Heart left ventricle (tissue), 16 donors: ENCODE measurements at regions of chr1 and their contacts with region 1.

Region 1: GRCh38 chr1:91885716-91886506 is at the start of gene TGFBR3:
- DNase-seq: peak; percentile 93 to 96 (median 95)
- ATAC-seq: peak; percentile 95 to 97 (median 96)
- H3K4me3 ChIP-seq: peak within 1 kb of the TSS; percentile 70 to 100 (median 92)
- H3K27ac ChIP-seq: peak within 1 kb of the TSS; percentile 85 to 98 (median 94)
- H3K4me1 ChIP-seq: peaks cover 0 to 42% (median 17%) of the 10 kb centered on the region in 12 donors
- H3K27me3 ChIP-seq: peaks cover 0 to 29% (median 0%) of the 10 kb centered on the region in 9 donors
- CTCF ChIP-seq: peak; percentile 26 to 74 (median 54)
- POLR2A ChIP-seq: peak in 1 of 2 donors; percentile 89
- total RNA-seq, gene TGFBR3: 10.3 to 51.8 (median 28.1) TPM

Region 2: DNA sequence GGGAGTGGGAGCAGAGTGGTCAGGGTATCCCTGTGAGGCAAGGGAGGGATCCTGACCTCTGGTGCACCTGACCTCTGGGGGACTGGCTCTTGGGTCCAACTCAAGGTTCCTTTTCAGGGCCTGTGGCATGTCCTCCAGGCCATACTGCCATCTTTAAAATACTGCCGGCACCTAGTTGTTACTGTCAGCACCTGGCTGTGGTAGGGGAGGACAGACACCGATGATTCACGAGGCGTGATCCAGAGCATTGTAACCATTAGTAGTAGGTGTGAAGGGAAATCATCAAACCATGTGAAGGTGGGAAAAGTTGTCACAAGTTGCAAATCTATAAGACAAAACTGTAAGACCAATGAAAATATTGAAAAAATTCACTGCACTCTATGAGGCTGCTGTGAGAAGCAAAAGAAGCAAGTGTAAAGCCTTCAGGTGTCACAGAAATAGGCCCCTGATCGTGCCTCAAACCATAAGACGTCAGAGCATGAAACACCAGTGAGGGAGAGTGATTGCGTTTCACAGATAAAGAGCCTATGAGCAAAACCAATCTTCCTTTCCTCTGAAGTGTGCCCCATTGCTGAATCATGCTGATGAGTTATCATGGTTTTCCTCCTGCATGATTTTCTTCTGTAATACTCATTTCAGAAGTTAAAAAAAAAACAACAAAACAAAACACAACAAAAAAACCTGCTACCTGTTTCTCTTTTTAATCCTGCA is 329.9 kb before region 1 on chr1:
- intact Hi-C with region 1: loop called in 1 of 10 experiments (anchors 10 kb)
- DNase-seq: no peak
- ATAC-seq: peak in 1 of 4 donors; percentile 50
- H3K4me3 ChIP-seq: no peak overlapping the region
- H3K27ac ChIP-seq: peak overlapping the region in 2 of 12 donors; percentile 28 to 80
- H3K4me1 ChIP-seq: peaks cover 0 to 40% (median 0%) of the 10 kb centered on the region in 12 donors
- H3K27me3 ChIP-seq: no peaks in the 10 kb centered on the region
- CTCF ChIP-seq: no peak
- POLR2A ChIP-seq: no peak

Region 3: DNA sequence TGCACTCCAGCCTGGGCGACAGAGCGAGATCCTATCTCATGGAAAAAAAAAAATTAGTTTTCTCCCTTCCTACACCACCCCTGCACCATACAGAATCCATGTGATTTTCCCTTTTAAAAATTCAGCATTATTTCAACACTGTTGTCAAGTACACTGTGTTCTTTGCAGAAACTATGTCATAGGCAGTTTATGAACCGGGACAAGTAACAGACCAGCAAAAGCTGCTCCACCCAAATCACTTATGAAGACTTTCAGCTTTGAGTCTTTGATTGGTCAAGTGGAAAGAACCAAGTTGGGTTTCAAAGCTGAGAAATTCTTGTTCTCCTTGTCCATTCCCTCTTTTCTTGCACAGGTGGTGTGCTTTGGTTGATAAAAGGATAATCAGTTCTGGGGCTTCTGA is 212.3 kb before region 1 on chr1:
- intact Hi-C with region 1: no loop called
- DNase-seq: no peak
- ATAC-seq: peak in 3 of 4 donors; percentile 42 to 66 (median 50)
- H3K4me3 ChIP-seq: no peak overlapping the region
- H3K27ac ChIP-seq: no peak overlapping the region
- H3K4me1 ChIP-seq: no peaks in the 10 kb centered on the region
- H3K27me3 ChIP-seq: no peaks in the 10 kb centered on the region
- CTCF ChIP-seq: no peak
- POLR2A ChIP-seq: no peak

Region 4: DNA sequence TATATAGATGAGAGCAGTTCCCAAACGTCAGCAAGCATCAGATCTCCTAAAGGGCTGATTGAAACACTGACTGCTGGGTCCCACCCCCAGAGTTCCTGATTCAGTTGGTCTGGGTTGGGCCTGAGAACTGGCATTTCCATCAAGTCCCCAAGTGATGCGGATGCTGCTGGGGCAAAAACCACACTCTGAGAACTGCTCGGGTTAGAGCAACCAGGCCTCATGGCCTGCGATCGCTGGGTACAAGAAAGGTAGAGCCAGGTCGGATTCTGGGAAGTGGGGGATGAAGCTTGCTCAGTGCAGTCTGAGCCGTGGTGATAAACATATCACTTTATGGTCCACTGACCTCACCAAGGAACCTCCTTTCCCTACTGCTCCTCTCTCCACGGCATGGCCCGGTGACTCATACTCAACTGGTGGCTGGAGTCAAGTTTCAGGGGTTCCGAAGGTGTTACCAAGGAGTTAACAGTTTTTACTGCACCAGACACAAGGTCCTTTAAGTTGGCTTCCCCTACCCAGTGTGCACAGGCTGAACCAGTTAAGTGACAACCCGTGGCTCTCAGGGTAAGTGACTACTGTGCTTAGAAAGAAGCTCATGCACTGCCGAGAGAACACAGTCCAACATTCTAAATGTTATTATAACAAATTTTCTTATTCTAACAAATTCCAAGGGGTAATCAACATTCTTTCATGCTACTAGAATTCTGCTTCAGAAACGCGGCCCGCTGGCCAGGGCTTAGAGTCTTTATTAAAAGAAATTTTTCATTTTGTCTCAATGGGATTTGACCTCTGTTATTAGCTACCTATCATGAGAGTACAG is 153.4 kb before region 1 on chr1:
- intact Hi-C with region 1: loop called in 2 of 10 experiments (anchors 10 kb)
- DNase-seq: no peak
- ATAC-seq: peak in 2 of 4 donors; percentile 2 to 32
- H3K4me3 ChIP-seq: no peak overlapping the region
- H3K27ac ChIP-seq: peak overlapping the region in 5 of 12 donors; percentile 24 to 92 (median 42)
- H3K4me1 ChIP-seq: peaks cover 0 to 78% (median 44%) of the 10 kb centered on the region in 12 donors
- H3K27me3 ChIP-seq: no peaks in the 10 kb centered on the region
- CTCF ChIP-seq: no peak
- POLR2A ChIP-seq: no peak

Region 5: GRCh38 chr1:91795591-91796389 is 90.1 kb before region 1 on chr1:
- intact Hi-C with region 1: loop called in 1 of 10 experiments (anchors 10 kb)
- DNase-seq: no peak
- ATAC-seq: no peak
- H3K4me3 ChIP-seq: no peak overlapping the region
- H3K27ac ChIP-seq: peak overlapping the region in 4 of 12 donors; percentile 7 to 76 (median 24)
- H3K4me1 ChIP-seq: peaks cover 0 to 69% (median 46%) of the 10 kb centered on the region in 12 donors
- H3K27me3 ChIP-seq: no peaks in the 10 kb centered on the region
- CTCF ChIP-seq: no peak
- POLR2A ChIP-seq: no peak

Region 6: DNA sequence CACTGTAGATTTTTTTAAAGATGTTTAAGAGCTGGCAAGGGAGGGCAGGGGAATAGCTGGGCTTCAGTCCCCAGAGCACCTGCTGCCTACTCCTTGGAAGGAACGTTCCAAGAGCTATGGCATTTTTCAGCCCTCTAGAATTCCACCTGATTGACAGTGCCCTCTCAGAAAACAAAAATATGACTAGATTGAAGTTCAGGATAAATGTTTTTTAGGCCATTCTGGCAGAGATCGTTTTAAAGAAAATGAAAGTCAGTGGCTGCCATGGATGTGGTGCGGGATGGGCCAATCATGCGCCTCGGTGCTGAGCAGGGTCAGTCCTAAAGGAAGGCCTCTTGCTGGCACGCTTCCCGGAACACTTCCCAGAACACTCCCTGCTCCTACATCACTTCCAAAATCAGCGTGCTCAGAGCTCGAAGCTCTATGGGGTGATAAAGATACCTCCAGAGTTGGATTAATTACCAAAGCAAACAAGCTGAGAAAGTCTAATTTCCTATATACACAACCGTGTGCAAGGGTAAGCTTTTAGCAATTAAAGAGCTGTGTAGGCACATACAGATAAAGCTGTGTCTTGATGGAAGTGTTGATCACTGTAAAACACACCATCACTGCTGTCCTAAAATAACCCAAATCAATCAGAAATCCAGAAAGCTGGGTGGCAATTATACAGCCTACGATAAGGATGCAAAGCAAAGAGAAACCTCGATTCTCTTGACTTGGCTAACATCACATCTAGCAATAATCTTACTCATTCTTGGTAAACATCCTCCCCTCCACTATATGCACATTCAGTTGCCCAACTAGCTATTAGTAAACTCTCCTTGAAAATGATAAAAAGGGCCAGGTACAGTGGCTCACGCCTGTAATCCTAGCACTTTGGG is 34.5 kb before region 1 on chr1:
- intact Hi-C with region 1: loop called in 3 of 10 experiments (anchors 5 kb)
- DNase-seq: peak; percentile 93 to 97 (median 95)
- ATAC-seq: peak; percentile 96 to 97 (median 97)
- H3K4me3 ChIP-seq: peak overlapping the region in 10 of 12 donors; percentile 20 to 53 (median 40)
- H3K27ac ChIP-seq: peak overlapping the region; percentile 57 to 92 (median 85)
- H3K4me1 ChIP-seq: peaks cover 7 to 59% (median 26%) of the 10 kb centered on the region in 12 donors
- H3K27me3 ChIP-seq: no peaks in the 10 kb centered on the region
- CTCF ChIP-seq: no peak
- POLR2A ChIP-seq: no peak